Activated naive CD4-positive, alpha-beta T cell treated with anti-CD3 and anti-CD28 coated beads for 36 hours (primary cell): ENCODE measurements at regions of chr3 and their contacts with region 1.

Region 1: GRCh38 chr3:38738630-38739395 is 77.2 kb downstream of the SCN10A start:
- DNase-seq: peak; percentile 66
- H3K4me3 Mint-ChIP-seq: no peak overlapping the region
- H3K27ac Mint-ChIP-seq: no peak overlapping the region
- H3K4me1 Mint-ChIP-seq: no peaks in the 10 kb centered on the region
- H3K27me3 Mint-ChIP-seq: peaks cover 4% of the 10 kb centered on the region

Region 2: GRCh38 chr3:38579551-38580449 is 159.0 kb before region 1 on chr3:
- CTCF ChIA-PET with region 1: no interaction called
- intact Hi-C with region 1: no loop called
- DNase-seq: no peak
- H3K4me3 Mint-ChIP-seq: no peak overlapping the region
- H3K27ac Mint-ChIP-seq: no peak overlapping the region
- H3K4me1 Mint-ChIP-seq: no peaks in the 10 kb centered on the region
- H3K27me3 Mint-ChIP-seq: no peaks in the 10 kb centered on the region

Region 3: DNA sequence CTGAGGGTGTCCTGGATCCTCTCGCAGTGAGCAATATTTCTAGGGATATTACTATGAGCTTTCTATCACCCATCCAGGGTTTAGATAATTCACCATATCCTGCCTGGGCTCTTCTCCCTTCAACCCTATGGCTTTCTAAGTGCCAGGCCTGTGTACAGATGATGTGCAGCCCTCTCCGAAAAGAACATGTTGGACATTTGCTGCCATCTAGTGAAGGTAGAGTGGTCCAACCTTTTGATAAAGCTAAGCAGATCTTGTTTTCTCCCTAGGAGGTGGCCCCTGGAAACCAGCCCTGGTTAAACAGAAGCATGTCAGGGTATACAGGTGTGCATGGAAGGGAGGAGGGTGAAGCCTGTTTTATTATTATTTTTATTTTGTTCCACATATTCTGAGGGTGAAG is 105.1 kb after region 1 on chr3:
- CTCF ChIA-PET with region 1: interaction called, 5 read pairs
- intact Hi-C with region 1: loop called (anchors 5 kb)
- DNase-seq: peak; percentile 21
- H3K4me3 Mint-ChIP-seq: no peak overlapping the region
- H3K27ac Mint-ChIP-seq: no peak overlapping the region
- H3K4me1 Mint-ChIP-seq: no peaks in the 10 kb centered on the region
- H3K27me3 Mint-ChIP-seq: peaks cover 2% of the 10 kb centered on the region

Region 4: DNA sequence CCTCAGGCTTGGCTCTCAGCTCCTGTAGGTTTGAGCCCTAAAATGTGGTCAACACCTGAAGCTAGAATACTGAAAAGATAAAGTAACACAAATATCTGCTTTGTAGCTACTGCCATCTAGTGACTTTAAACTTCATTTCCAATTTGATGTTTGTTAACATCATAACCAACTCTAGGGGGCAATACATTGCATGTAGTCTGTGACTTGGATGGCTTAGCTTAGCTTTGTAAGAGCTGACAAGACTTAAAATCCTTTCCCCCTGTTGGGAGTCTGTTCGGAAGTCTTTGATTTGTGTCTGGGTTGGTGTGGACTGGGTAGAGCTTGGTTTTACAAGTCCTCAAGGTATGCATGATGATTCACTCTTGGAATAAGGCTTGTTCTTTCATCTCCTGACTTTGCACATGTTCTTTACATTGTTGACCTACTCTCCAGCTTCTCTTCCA is 261.2 kb after region 1 on chr3:
- CTCF ChIA-PET with region 1: interaction called, 4 read pairs
- intact Hi-C with region 1: loop called (anchors 1 kb)
- DNase-seq: no peak
- H3K4me3 Mint-ChIP-seq: no peak overlapping the region
- H3K27ac Mint-ChIP-seq: no peak overlapping the region
- H3K4me1 Mint-ChIP-seq: no peaks in the 10 kb centered on the region
- H3K27me3 Mint-ChIP-seq: no peaks in the 10 kb centered on the region

Region 5: GRCh38 chr3:39025222-39025970 is 286.6 kb after region 1 on chr3:
- CTCF ChIA-PET with region 1: no interaction called
- intact Hi-C with region 1: loop called (anchors 2 kb)
- DNase-seq: no peak
- H3K4me3 Mint-ChIP-seq: no peak overlapping the region
- H3K27ac Mint-ChIP-seq: no peak overlapping the region
- H3K4me1 Mint-ChIP-seq: no peaks in the 10 kb centered on the region
- H3K27me3 Mint-ChIP-seq: peaks cover 2% of the 10 kb centered on the region